Vagina (tissue), 2 donors: ENCODE measurements at regions of chr5 and their contacts with region 1.

Region 1: GRCh38 chr5:146291421-146292074 is 47.1 kb upstream of the POU4F3 start:
- DNase-seq: no peak
- H3K4me3 ChIP-seq: no peak overlapping the region
- H3K27ac ChIP-seq: no peak overlapping the region
- H3K4me1 ChIP-seq: no peaks in the 10 kb centered on the region
- H3K27me3 ChIP-seq: no peaks in the 10 kb centered on the region
- CTCF ChIP-seq: peak in 2 of 3 experiments; percentile 40 to 46
- POLR2A ChIP-seq: no peak

Region 2: GRCh38 chr5:146409054-146409671 is 117.6 kb after region 1 on chr5:
- intact Hi-C with region 1: loop called (anchors 10 kb)
- DNase-seq: no peak
- H3K4me3 ChIP-seq: no peak overlapping the region
- H3K27ac ChIP-seq: no peak overlapping the region
- H3K4me1 ChIP-seq: no peaks in the 10 kb centered on the region
- H3K27me3 ChIP-seq: no peaks in the 10 kb centered on the region
- CTCF ChIP-seq: no peak
- POLR2A ChIP-seq: no peak